Activated T-helper 1 cell treated with anti-CD3 and anti-CD28 coated beads, Interleukin-12 subunit alpha, Interleukin-12 subunit beta, Interleukin-2, Interleukin-4 antibody, amounts not matched to agents 30 ng/mL and 10 ng/mL and 1 ng/mL, durations not matched to agents 14 hours and 24 hours and 36 hours (primary cell): ENCODE measurements at regions of chr3 and their contacts with region 1.

Region 1: GRCh38 chr3:192892981-192893700 is 24.5 kb downstream of the MB21D2 start:
- DNase-seq: peak; percentile 81
- H3K4me3 Mint-ChIP-seq: peak overlapping the region; percentile 15
- H3K27ac Mint-ChIP-seq: peak overlapping the region; percentile 88
- H3K4me1 Mint-ChIP-seq: peaks cover 95% of the 10 kb centered on the region
- H3K27me3 Mint-ChIP-seq: peaks cover 2% of the 10 kb centered on the region

Region 2: DNA sequence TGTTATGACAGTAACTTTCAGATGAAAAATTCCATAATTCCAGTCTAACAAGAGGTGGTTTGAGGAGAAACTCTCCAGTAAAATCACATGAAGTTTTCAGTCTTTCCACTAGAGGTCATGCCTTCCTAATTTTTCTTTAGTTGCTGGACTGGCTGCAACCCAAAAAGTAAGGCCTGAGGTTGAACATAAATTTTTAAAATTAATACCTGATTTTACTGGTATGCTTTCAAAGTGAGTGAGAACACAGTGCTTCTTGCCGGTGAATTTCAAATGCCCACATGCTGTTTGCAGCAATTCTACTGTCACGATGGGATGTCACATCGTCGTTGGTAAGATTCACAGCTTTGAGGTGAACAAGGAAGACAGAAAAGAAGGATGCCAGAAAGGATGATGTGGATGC is 76.8 kb before region 1 on chr3:
- intact Hi-C with region 1: loop called (anchors 1 kb)
- DNase-seq: no peak
- H3K4me3 Mint-ChIP-seq: peak overlapping the region; percentile 23
- H3K27ac Mint-ChIP-seq: peak overlapping the region; percentile 54
- H3K4me1 Mint-ChIP-seq: peaks cover 82% of the 10 kb centered on the region
- H3K27me3 Mint-ChIP-seq: peaks cover 2% of the 10 kb centered on the region

Region 3: DNA sequence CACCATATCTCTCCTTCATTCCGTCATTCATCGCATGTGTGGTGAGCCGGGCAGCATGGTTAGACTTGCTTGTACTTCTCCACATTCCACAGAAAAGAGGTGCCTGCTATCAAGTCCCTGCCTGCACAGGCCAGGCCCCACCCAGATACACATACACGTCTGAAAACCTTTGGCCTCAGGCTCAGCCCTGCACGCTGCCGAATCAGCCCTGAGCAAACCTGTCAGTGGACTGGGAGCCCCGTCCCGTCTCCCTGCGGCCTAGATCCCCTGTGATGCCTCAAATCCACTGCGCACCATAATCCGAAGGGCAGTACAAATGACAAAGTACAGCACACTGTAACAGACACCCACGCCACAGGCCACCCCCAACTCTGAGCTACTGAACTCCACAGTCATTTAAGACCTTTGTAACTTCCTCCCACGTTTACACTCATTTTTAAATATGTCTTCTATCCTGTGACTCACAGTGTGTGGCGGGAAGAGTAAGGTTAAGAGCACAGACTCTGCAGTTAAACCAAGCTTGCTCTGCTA is 42.6 kb before region 1 on chr3:
- intact Hi-C with region 1: loop called (anchors 1 kb)
- DNase-seq: peak; percentile 46
- H3K4me3 Mint-ChIP-seq: peak overlapping the region; percentile 53
- H3K27ac Mint-ChIP-seq: peak overlapping the region; percentile 83
- H3K4me1 Mint-ChIP-seq: peaks cover 73% of the 10 kb centered on the region
- H3K27me3 Mint-ChIP-seq: no peaks in the 10 kb centered on the region

Region 4: DNA sequence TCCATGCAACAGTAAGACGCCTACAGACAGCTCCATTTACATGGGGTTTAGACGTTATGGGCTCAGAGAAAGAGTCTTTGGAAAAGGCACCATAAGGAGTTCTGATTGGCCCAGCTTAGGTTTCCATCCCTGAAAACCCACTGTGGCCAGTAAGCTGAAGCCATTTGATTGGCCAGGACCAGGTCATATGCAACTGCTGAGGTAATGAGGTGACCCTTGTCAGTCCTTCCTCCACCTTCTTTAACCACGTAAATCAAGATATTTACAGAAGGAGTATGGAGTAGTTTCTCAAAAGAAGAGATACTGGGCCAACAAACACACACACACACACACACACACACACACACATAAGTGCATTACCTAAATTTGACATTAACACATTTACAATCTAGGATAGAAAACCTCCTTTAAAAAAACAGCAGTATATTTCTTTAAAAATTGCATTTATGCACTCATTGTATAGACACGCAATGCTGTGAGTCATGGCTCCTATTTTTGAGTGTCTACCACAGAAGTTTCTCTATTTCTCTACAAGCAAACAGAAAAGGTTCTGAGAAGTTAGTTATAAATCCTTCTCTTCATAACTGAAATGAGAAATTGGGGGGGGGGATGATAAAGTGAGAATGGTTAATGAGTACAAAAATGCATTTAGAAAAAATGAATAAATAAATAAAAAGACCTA is 40.8 kb after region 1 on chr3:
- intact Hi-C with region 1: no loop called
- DNase-seq: no peak
- H3K4me3 Mint-ChIP-seq: no peak overlapping the region
- H3K27ac Mint-ChIP-seq: peak overlapping the region; percentile 53
- H3K4me1 Mint-ChIP-seq: peaks cover 12% of the 10 kb centered on the region
- H3K27me3 Mint-ChIP-seq: peaks cover 4% of the 10 kb centered on the region

Region 5: GRCh38 chr3:192957441-192958021 is 64.4 kb after region 1 on chr3:
- intact Hi-C with region 1: loop called (anchors 1 kb)
- DNase-seq: peak; percentile 22
- H3K4me3 Mint-ChIP-seq: peak overlapping the region; percentile 50
- H3K27ac Mint-ChIP-seq: peak overlapping the region; percentile 82
- H3K4me1 Mint-ChIP-seq: peaks cover 32% of the 10 kb centered on the region
- H3K27me3 Mint-ChIP-seq: no peaks in the 10 kb centered on the region

Region 6: DNA sequence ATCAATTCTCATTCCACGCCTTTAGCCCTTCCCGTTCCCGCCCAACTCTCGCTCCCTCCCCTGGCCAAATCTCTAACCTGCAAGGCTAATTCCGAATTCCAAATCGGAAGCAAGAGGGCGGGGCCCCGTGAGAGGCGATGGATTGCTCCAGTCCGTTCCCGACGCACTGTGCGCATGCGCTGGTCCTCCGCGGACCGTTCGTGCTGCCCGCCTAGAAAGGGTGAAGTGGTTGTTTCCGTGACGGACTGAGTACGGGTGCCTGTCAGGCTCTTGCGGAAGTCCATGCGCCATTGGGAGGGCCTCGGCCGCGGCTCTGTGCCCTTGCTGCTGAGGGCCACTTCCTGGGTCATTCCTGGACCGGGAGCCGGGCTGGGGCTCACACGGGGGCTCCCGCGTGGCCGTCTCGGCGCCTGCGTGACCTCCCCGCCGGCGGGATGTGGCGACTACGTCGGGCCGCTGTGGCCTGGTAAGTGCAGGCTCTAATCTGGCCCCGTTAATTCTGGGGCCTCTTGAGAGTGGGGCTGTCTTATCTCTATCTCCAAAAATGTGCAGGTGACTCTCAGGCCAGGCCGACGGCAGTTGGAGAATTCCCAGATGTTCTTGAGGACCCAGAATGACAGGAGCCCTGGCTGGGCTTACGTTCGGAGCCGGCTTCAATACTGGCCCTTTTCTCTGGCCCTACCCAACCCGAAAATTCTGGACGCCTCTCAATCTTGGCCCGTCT is 700.0 kb after region 1 on chr3 and contains the start of gene OPA1:
- intact Hi-C with region 1: loop called (anchors 1 kb)
- DNase-seq: peak; percentile 90
- H3K4me3 Mint-ChIP-seq: peak within 1 kb of the TSS; percentile 98
- H3K27ac Mint-ChIP-seq: peak within 1 kb of the TSS; percentile 99
- H3K4me1 Mint-ChIP-seq: peaks cover 49% of the 10 kb centered on the region
- H3K27me3 Mint-ChIP-seq: no peaks in the 10 kb centered on the region
- total RNA-seq, gene OPA1: 78.1 and 91.2 TPM in 2 replicates